CD8-positive, alpha-beta T cell (primary cell): ENCODE measurements at regions of chr4 and their contacts with region 1.

Region 1: GRCh38 chr4:121900132-121900983 is 30.1 kb upstream of the BBS7 start:
- DNase-seq: peak in 8 of 9 experiments; percentile 9 to 77 (median 50)
- ATAC-seq: peak; percentile 80
- H3K4me3 ChIP-seq: no peak overlapping the region
- H3K4me3 Mint-ChIP-seq: no peak overlapping the region
- H3K27ac ChIP-seq: no peak overlapping the region
- H3K27ac Mint-ChIP-seq: no peak overlapping the region
- H3K4me1 ChIP-seq: peaks cover 4% of the 10 kb centered on the region
- H3K4me1 Mint-ChIP-seq: peaks cover 10% of the 10 kb centered on the region
- H3K27me3 ChIP-seq: no peaks in the 10 kb centered on the region
- H3K27me3 Mint-ChIP-seq: peaks cover 10% of the 10 kb centered on the region
- CTCF ChIP-seq: peak; percentile 72

Region 2: GRCh38 chr4:121913667-121914066 is 13.3 kb after region 1 on chr4:
- CTCF ChIA-PET with region 1: interaction called, 15 read pairs
- POLR2A ChIA-PET with region 1: interaction called, 3 read pairs
- intact Hi-C with region 1: no loop called
- DNase-seq: no peak
- ATAC-seq: no peak
- H3K4me3 ChIP-seq: no peak overlapping the region
- H3K4me3 Mint-ChIP-seq: no peak overlapping the region
- H3K27ac ChIP-seq: no peak overlapping the region
- H3K27ac Mint-ChIP-seq: no peak overlapping the region
- H3K4me1 ChIP-seq: no peaks in the 10 kb centered on the region
- H3K4me1 Mint-ChIP-seq: peaks cover 5% of the 10 kb centered on the region
- H3K27me3 ChIP-seq: no peaks in the 10 kb centered on the region
- H3K27me3 Mint-ChIP-seq: peaks cover 4% of the 10 kb centered on the region
- CTCF ChIP-seq: no peak

Region 3: DNA sequence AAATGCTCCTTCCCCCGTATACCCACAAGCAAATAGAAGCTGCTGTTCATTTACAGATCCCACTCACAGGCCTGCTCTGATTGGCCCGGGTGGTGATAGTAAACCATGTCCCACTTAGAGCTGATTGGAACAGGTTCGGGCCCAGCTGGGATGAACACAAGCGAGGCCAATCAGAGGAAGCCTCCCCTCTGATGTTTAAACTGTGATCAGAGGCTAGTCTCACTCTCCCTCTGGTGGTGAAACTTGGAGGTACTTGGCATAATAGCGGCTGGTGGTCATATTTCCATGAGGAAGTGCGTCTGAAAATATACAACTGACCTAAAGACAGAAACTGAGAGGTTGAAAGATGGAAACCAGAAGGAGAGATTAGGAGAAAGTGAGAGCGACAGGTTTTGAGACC is 103.0 kb after region 1 on chr4:
- CTCF ChIA-PET with region 1: interaction called, 5 read pairs
- POLR2A ChIA-PET with region 1: no interaction called
- intact Hi-C with region 1: loop called (anchors 1 to 2 kb)
- DNase-seq: peak in 5 of 9 experiments; percentile 2 to 80 (median 21)
- ATAC-seq: peak; percentile 34
- H3K4me3 ChIP-seq: no peak overlapping the region
- H3K4me3 Mint-ChIP-seq: no peak overlapping the region
- H3K27ac ChIP-seq: no peak overlapping the region
- H3K27ac Mint-ChIP-seq: no peak overlapping the region
- H3K4me1 ChIP-seq: no peaks in the 10 kb centered on the region
- H3K4me1 Mint-ChIP-seq: no peaks in the 10 kb centered on the region
- H3K27me3 ChIP-seq: no peaks in the 10 kb centered on the region
- H3K27me3 Mint-ChIP-seq: peaks cover 16% of the 10 kb centered on the region
- CTCF ChIP-seq: no peak

Region 4: GRCh38 chr4:122224348-122224747 is 324.0 kb after region 1 on chr4:
- CTCF ChIA-PET with region 1: interaction called, 3 read pairs
- POLR2A ChIA-PET with region 1: no interaction called
- intact Hi-C with region 1: loop called (anchors 2 to 5 kb)
- DNase-seq: peak in 4 of 9 experiments; percentile 7 to 35 (median 12)
- ATAC-seq: no peak
- H3K4me3 ChIP-seq: no peak overlapping the region
- H3K4me3 Mint-ChIP-seq: no peak overlapping the region
- H3K27ac ChIP-seq: no peak overlapping the region
- H3K27ac Mint-ChIP-seq: no peak overlapping the region
- H3K4me1 ChIP-seq: no peaks in the 10 kb centered on the region
- H3K4me1 Mint-ChIP-seq: peaks cover 8% of the 10 kb centered on the region
- H3K27me3 ChIP-seq: no peaks in the 10 kb centered on the region
- H3K27me3 Mint-ChIP-seq: no peaks in the 10 kb centered on the region
- CTCF ChIP-seq: no peak

Region 5: GRCh38 chr4:122930862-122931261 is 1030.5 kb after region 1 on chr4:
- CTCF ChIA-PET with region 1: interaction called, 3 read pairs
- POLR2A ChIA-PET with region 1: no interaction called
- intact Hi-C with region 1: loop called in 1 of 2 experiments (anchors 5 kb)
- DNase-seq: peak in 2 of 9 experiments; percentile 12 to 37
- ATAC-seq: no peak
- H3K4me3 ChIP-seq: no peak overlapping the region
- H3K4me3 Mint-ChIP-seq: no peak overlapping the region
- H3K27ac ChIP-seq: no peak overlapping the region
- H3K27ac Mint-ChIP-seq: no peak overlapping the region
- H3K4me1 ChIP-seq: no peaks in the 10 kb centered on the region
- H3K4me1 Mint-ChIP-seq: peaks cover 9% of the 10 kb centered on the region
- H3K27me3 ChIP-seq: no peaks in the 10 kb centered on the region
- H3K27me3 Mint-ChIP-seq: no peaks in the 10 kb centered on the region
- CTCF ChIP-seq: peak; percentile 68